ENCODE measurements at regions of chr12 and their contacts with region 1.

Region 1: GRCh38 chr12:98490501-98491453 is 24.6 kb upstream of the TMPO start:
- DNase-seq: peak; percentile 67 to 84 (median 74)
- ATAC-seq: peak; percentile 90
- H3K4me3 ChIP-seq: no peak overlapping the region
- H3K27ac ChIP-seq: no peak overlapping the region
- H3K4me1 ChIP-seq: peaks cover 0 to 5% of the 10 kb centered on the region in 2 experiments; a peak in 3 of 5 replicates
- H3K27me3 ChIP-seq: peaks cover 0 to 3% of the 10 kb centered on the region in 2 experiments; a peak in 1 of 5 replicates
- CTCF ChIP-seq: peak; percentile 87 to 90 (median 88)
- EP300 ChIP-seq: no peak
- POLR2A ChIP-seq: no peak
- RAD21 ChIP-seq: peak; percentile 80 to 81

Region 2: DNA sequence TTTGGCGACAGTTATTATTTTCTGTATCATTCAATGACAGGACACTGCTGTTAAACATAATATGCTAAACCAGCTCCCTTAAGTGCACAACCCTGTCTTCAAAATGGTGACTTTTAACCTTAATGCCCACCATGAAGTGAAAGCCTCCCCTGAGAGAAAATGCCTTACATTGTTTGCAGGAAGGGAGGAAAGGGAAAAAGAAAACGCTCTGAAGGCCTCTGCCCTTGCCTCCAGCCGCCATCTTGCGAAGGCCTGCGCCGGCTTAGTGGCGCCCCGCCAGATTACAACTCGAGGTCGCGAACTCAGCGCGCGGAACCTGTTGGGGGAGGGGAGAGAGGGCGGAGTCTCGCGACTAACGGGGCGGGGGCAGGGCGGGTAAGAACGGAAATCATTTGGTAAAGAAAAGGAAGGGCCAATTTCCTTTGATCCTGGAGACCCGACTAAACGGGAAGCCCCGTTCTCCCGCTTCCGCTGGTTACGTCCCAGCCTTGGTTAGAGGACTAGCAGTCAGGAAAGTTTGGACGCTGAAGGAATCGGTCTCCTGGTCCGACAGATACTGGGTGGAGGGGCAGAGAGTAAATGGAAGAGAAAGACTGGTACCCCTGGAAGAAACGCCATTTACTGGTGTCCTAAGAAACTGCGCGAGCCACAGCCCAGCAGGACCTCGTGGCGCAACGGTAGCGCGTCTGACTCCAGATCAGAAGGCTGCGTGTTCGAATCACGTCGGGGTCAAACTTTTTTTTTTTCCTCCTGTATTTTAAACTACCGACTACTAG is 13.0 kb after region 1 on chr12:
- CTCF ChIA-PET with region 1: no interaction called
- POLR2A ChIA-PET with region 1: interaction called, 3 read pairs
- in situ Hi-C with region 1: no loop called
- intact Hi-C with region 1: loop called (anchors 1 kb)
- DNase-seq: peak; percentile 84 to 96 (median 86)
- ATAC-seq: peak; percentile 86
- H3K4me3 ChIP-seq: peak overlapping the region; percentile 59
- H3K27ac ChIP-seq: peak overlapping the region; percentile 99
- H3K4me1 ChIP-seq: peaks cover 2 to 5% of the 10 kb centered on the region in 2 experiments; a peak in 3 of 5 replicates
- H3K27me3 ChIP-seq: no peaks in the 10 kb centered on the region
- CTCF ChIP-seq: 0 out of 6 replicates have a peak, but pooled peaks of 2 of the 3 experiments have one; percentile 1 to 2
- EP300 ChIP-seq: peak; percentile 64; the same call in 1 of the 2 replicates
- POLR2A ChIP-seq: peak; percentile 81
- RAD21 ChIP-seq: peak in 1 of 2 experiments; percentile 6; a peak in 1 of 4 replicates

Region 3: DNA sequence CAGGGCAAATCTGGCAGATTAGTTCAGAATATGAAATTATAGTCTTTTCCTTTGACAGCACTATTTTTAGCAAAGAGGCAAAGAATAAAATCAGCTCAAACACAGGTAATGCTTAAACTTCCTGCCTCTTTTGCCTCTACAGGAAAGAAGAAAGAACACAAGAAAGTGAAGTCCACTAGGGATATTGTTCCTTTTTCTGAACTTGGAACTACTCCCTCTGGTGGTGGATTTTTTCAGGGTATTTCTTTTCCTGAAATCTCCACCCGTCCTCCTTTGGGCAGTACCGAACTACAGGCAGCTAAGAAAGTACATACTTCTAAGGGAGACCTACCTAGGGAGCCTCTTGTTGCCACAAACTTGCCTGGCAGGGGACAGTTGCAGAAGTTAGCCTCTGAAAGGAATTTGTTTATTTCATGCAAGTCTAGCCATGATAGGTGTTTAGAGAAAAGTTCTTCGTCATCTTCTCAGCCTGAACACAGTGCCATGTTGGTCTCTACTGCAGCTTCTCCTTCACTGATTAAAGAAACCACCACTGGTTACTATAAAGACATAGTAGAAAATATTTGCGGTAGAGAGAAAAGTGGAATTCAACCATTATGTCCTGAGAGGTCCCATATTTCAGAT is 42.0 kb after region 1 on chr12:
- CTCF ChIA-PET with region 1: no interaction called
- POLR2A ChIA-PET with region 1: no interaction called
- in situ Hi-C with region 1: no loop called
- intact Hi-C with region 1: loop called (anchors 5 kb)
- DNase-seq: peak; percentile 46 to 74 (median 50)
- ATAC-seq: peak; percentile 85
- H3K4me3 ChIP-seq: no peak overlapping the region
- H3K27ac ChIP-seq: no peak overlapping the region; the same call in 2 of the 3 replicates
- H3K4me1 ChIP-seq: peaks cover 0 to 12% of the 10 kb centered on the region in 2 experiments; a peak in 3 of 5 replicates
- H3K27me3 ChIP-seq: no peaks in the 10 kb centered on the region
- CTCF ChIP-seq: peak; percentile 67 to 83 (median 73)
- EP300 ChIP-seq: no peak
- POLR2A ChIP-seq: no peak
- RAD21 ChIP-seq: peak; percentile 57 to 62

Region 4: GRCh38 chr12:98544751-98545150 is 54.0 kb after region 1 on chr12:
- CTCF ChIA-PET with region 1: no interaction called
- POLR2A ChIA-PET with region 1: no interaction called
- in situ Hi-C with region 1: no loop called
- intact Hi-C with region 1: no loop called
- DNase-seq: no peak
- ATAC-seq: no peak
- H3K4me3 ChIP-seq: no peak overlapping the region
- H3K27ac ChIP-seq: no peak overlapping the region
- H3K4me1 ChIP-seq: no peaks in the 10 kb centered on the region
- H3K27me3 ChIP-seq: no peaks in the 10 kb centered on the region
- CTCF ChIP-seq: no peak
- EP300 ChIP-seq: no peak
- POLR2A ChIP-seq: no peak
- RAD21 ChIP-seq: no peak

Region 5: GRCh38 chr12:98955277-98955676 is 464.5 kb after region 1 on chr12:
- CTCF ChIA-PET with region 1: no interaction called
- POLR2A ChIA-PET with region 1: no interaction called
- in situ Hi-C with region 1: no loop called
- intact Hi-C with region 1: no loop called
- DNase-seq: peak; percentile 10 to 38 (median 18)
- ATAC-seq: peak; percentile 86
- H3K4me3 ChIP-seq: no peak overlapping the region
- H3K27ac ChIP-seq: no peak overlapping the region
- H3K4me1 ChIP-seq: no peaks in the 10 kb centered on the region
- H3K27me3 ChIP-seq: no peaks in the 10 kb centered on the region
- CTCF ChIP-seq: peak in 2 of 3 experiments; percentile 42 to 47; a peak in 2 of 6 replicates
- EP300 ChIP-seq: no peak
- POLR2A ChIP-seq: no peak
- RAD21 ChIP-seq: no peak

Measured in K562 (cell line).